ENCODE measurements at regions of chr19 and their contacts with region 1.

Region 1: GRCh38 chr19:11380653-11381534 is 3.2 kb downstream of the EPOR start:
- DNase-seq: peak; percentile 99
- H3K4me3 Mint-ChIP-seq: peak overlapping the region; percentile 83
- H3K27ac Mint-ChIP-seq: peak overlapping the region; percentile 98
- H3K4me1 Mint-ChIP-seq: peaks cover 46% of the 10 kb centered on the region
- H3K27me3 Mint-ChIP-seq: peaks cover 22% of the 10 kb centered on the region

Region 2: DNA sequence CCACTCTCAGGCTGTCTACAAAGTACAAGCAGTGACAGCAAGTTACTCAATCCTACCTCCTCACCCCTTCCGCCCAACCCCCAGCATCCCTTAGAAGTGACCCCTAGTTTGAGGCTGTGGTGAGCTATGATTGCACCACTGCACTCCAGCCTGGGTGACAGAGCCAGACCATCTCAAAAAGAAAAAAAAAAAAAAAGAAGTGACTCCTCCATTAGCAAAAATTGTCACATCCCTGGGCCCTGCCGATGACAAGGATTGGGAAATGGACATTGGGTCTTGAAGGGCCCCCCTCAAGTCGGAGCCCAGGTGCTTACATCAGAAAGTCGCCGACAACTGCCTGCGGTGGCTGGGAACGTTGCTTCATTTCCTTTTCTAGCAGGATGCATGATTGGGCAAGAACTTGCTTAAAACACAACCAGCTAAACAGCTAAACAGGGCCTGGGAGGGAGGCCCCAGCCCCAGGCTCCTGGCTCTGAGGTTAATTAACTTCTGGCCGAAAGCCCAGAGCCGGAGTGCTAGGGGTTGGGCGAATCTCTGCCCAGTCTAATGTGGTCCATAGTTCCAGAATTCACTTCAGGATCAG is 56.7 kb before region 1 on chr19:
- CTCF ChIA-PET with region 1: interaction called, 17 read pairs
- POLR2A ChIA-PET with region 1: no interaction called
- DNase-seq: peak; percentile 52
- H3K4me3 Mint-ChIP-seq: peak overlapping the region; percentile 55
- H3K27ac Mint-ChIP-seq: peak overlapping the region; percentile 88
- H3K4me1 Mint-ChIP-seq: peaks cover 17% of the 10 kb centered on the region
- H3K27me3 Mint-ChIP-seq: peaks cover 4% of the 10 kb centered on the region

Region 3: DNA sequence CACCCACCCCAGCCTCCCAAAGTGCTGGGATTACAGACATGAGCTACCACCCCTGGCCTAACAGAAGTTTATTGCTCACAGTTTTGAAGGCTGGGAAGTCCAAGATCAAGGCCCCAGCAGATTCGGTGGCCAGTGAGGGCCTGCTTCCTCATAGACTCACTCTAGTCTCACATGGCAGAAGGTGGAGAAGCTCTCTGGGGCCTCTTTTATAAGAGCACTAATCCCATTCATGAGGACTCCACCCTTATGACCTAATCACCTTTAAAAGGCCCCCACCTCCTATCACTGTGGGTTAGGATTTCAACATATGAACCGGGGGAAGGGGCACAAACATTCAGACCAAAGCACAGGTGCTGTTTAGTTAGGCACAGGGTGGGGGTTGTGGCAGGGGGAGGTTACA is 13.4 kb before region 1 on chr19:
- CTCF ChIA-PET with region 1: interaction called, 28 read pairs
- POLR2A ChIA-PET with region 1: interaction called, 4 read pairs
- DNase-seq: no peak
- H3K4me3 Mint-ChIP-seq: no peak overlapping the region
- H3K27ac Mint-ChIP-seq: no peak overlapping the region
- H3K4me1 Mint-ChIP-seq: no peaks in the 10 kb centered on the region
- H3K27me3 Mint-ChIP-seq: no peaks in the 10 kb centered on the region

Region 4: DNA sequence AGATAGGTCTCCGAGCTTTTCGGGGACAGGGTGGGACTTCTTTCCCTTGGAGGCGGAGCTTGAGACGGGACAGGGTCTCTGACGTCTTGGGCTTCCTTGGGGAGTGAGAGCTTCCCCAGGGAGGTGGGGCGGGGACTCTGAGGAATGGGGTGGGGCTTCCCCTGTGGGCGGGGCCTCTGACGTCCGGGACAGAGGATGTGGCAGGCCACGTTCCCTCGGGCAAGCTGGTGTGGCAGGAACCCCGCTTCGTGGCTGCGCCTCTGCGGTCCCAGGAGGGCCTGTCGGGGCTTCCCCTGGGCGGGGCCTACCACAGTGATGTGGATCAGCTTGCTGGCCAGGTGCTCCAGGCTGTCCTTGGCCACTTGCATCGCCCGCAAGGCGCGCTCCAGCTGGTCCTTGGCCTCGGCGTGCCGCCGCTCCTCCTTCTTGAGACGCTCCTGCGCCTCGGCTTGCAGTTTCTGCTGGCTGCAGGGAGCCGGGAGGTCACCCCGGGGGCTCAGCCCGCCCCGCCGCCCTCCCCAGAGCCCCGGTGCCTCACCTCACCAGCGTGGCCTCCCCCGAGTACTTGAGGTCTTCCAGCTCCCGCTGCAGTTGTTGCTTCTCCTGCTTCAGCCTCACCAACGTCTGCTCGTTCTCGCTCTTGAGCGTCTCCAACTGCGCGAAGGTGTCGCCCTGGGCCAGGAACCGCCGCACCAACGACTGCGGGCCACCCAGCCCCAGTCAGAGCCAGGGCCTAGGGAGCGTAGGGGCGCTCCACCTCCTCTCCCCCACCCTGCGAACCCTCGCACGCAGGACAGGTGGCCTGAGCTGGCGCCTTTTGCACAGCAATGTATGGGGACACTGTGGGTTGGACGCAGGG is 41.5 kb after region 1 on chr19:
- CTCF ChIA-PET with region 1: interaction called, 18 read pairs
- POLR2A ChIA-PET with region 1: no interaction called
- DNase-seq: peak; percentile 62
- H3K4me3 Mint-ChIP-seq: peak overlapping the region; percentile 49
- H3K27ac Mint-ChIP-seq: peak overlapping the region; percentile 36
- H3K4me1 Mint-ChIP-seq: peaks cover 34% of the 10 kb centered on the region
- H3K27me3 Mint-ChIP-seq: peaks cover 57% of the 10 kb centered on the region

Region 5: GRCh38 chr19:11435058-11435832 is 54.4 kb after region 1 on chr19 and contains the starts of genes ODAD3 and PRKCSH:
- CTCF ChIA-PET with region 1: interaction called, 18 read pairs
- POLR2A ChIA-PET with region 1: interaction called, 7 read pairs
- DNase-seq: peak; percentile 100
- H3K4me3 Mint-ChIP-seq: peak within 1 kb of the TSS; percentile 98
- H3K27ac Mint-ChIP-seq: peak within 1 kb of the TSS; percentile 96
- H3K4me1 Mint-ChIP-seq: peaks cover 27% of the 10 kb centered on the region
- H3K27me3 Mint-ChIP-seq: peaks cover 2% of the 10 kb centered on the region
- total RNA-seq, gene ODAD3: not detected
- total RNA-seq, gene PRKCSH: 321 to 338 TPM

Region 6: GRCh38 chr19:11482384-11483050 is 101.6 kb after region 1 on chr19:
- CTCF ChIA-PET with region 1: interaction called, 12 read pairs
- POLR2A ChIA-PET with region 1: no interaction called
- DNase-seq: peak; percentile 83
- H3K4me3 Mint-ChIP-seq: peak overlapping the region; percentile 51
- H3K27ac Mint-ChIP-seq: peak overlapping the region; percentile 62
- H3K4me1 Mint-ChIP-seq: peaks cover 24% of the 10 kb centered on the region
- H3K27me3 Mint-ChIP-seq: peaks cover 31% of the 10 kb centered on the region

Measured in activated CD4-positive, alpha-beta T cell treated with anti-CD3 and anti-CD28 coated beads, Interleukin-2, amount 10 ng/mL, durations not matched to agents 7 days and 5 days (primary cell).